AG04449 (cell line): ENCODE measurements at regions of chr16 and their contacts with region 1.

Region 1: DNA sequence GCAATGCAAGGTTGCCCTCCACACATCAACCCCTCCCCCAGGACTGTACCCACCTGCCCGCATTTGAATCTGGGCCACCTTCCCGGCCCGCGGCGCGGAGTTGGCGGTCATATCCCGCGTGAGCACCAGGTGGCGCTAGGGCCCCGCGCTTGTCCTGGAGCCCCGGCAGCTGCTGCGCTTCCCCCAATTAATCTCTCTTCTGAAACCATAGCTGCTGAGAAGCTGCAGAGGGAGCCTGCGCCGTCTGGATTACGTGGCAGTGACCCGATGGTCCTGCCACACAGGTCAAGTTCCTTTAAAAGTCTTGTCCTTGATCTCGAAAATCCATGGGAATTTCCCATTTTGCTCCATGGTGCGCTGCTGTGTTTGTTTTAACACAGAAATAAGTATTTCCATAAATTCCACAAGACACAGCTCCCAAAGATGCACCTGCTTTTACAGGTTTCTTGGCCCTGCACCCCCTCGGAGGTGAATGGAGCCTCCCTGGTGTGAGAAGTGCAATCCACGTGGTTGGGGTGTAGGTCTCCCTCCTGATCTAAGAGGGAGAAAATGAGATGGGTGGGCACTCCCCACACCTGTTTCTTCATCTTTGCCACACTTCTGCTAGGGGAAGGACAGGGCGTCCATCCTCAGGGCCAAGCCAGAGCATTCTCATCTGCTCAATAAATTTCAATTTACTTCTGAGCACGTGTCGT is 22.1 kb downstream of the COX4I1 start:
- DNase-seq: no peak
- H3K4me3 ChIP-seq: no peak overlapping the region
- CTCF ChIP-seq: peak; percentile 98

Region 2: DNA sequence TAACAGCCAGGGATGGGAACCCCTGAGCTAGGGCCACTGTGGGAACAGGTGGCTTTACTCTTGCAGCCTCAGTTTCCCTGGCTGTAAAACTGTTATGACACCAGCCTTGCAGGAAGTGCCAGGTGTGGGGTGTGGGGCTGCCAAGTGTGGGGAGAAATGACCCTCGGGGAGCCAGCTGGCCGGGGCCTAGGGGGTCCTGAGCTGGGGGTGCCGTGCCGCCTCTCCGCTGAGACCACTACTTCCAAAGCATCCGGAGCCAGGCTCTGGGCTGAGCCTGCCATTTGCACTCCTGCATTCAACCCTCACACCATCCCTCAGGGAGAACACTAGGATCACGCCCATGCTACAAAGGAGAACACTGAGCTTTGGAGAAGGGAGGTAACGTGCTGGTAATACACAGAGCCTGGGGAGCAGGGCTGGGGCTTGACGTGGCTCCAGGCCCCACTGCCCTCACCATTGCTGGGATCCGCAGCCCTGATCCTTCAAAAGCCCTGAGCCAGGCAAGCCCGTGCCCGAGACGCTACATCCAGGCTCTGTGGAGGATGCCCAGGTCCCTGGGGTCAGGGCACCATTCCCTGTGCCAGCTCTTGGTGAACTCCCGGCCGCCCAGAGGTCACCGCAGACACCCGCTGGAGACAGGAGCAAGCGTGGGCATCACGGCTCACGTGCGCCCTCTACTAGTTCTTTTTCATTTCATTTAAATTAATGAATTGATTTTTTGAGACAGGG is 104.0 kb before region 1 on chr16:
- CTCF ChIA-PET with region 1: no interaction called
- POLR2A ChIA-PET with region 1: no interaction called
- DNase-seq: no peak
- H3K4me3 ChIP-seq: no peak overlapping the region
- CTCF ChIP-seq: peak; percentile 48

Region 3: GRCh38 chr16:85746828-85747227 is 74.8 kb before region 1 on chr16:
- CTCF ChIA-PET with region 1: no interaction called
- POLR2A ChIA-PET with region 1: no interaction called
- DNase-seq: no peak
- H3K4me3 ChIP-seq: no peak overlapping the region
- CTCF ChIP-seq: no peak

Region 4: GRCh38 chr16:85805442-85806045 is 16.0 kb before region 1 on chr16:
- CTCF ChIA-PET with region 1: interaction called, 63 read pairs
- POLR2A ChIA-PET with region 1: no interaction called
- DNase-seq: no peak
- H3K4me3 ChIP-seq: no peak overlapping the region
- CTCF ChIP-seq: no peak

Region 5: DNA sequence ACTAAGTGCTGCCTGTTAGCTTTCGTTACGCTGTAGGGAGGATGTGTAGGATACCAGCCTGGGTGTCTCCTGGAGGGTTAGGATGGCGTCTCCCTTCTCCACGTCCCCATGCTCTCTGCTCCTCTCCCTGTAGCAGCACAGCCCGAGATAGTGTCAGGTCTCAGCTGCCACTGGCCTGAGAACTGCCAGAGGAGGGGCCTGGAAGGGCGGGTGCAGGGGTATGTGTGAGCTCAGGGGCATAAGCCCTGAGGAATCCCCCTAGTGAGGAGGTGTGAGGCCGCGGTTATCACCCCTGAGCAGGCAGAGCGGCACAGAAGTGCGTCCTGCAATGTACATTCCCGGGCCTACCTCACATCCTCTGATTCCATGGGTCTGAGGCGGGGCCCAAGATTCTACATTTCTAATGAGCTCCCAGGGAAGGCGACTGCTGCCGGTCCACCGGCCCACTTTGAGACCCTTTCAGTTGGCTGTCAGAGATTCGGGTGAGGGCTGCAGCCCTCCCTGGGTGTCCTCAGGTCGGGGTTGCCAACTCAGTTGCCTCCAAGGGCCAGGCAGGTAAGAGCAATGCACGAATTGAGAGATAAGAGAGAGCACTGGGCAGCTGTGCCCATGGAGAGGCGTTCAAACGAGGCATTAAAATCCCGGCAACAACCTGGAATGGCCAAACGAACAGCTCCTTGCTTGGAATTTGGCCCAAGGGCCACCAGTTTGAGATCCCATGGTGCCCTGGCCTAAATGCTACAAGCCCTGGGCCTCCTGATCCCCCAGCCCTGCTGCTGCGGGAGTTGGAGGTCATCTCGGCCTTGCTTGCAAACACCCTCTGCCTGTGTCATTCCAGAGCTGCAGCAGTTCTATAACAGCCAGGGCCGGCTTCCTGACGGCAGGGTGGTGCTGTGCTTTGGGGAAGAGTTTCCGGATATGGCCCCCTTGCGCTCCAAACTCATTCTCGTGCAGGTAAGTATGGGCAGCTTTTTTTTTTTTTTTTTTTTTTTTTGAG is 98.0 kb after region 1 on chr16:
- CTCF ChIA-PET with region 1: no interaction called
- POLR2A ChIA-PET with region 1: no interaction called
- DNase-seq: no peak
- H3K4me3 ChIP-seq: no peak overlapping the region
- CTCF ChIP-seq: no peak

Region 6: DNA sequence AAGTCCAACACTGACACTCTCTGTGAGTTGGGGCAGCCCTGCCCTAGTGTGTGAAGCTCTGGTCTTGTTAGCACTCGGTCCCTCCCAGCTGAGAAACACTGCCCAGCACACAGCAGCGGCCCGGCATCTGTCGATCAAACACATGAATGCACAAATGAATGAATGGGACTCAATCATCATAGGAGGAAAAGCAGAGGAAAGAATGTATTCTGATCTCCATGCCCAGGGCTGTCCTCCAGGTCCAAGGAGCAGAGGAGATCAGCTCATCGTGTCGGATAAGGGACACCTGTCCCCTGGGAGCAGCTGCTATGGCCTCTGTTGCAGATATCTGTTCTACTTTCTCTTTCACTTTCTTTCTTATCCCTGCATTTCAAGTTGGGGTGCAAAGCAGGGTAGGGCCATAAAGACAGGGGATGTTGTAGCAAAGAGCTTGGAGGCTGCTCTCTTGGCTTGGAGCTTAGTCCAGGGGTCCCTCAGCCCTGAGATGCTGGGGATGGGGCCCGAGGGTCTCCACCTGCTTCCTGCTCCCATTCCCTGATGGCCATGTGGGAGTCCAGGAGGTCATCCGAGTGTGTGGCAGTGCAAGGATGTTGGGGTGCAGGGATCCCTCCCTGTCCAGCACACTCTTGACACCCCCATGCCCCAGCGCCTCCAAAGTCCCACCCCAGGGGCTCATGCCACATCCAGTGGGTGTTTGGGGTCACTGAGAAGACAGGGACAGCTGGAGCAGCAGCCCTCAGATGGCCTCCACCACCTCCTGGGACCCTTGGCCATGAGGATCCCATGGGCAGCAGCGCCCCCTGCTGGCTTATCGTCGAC is 165.6 kb after region 1 on chr16:
- CTCF ChIA-PET with region 1: interaction called, 146 read pairs
- POLR2A ChIA-PET with region 1: no interaction called
- DNase-seq: no peak
- H3K4me3 ChIP-seq: no peak overlapping the region
- CTCF ChIP-seq: peak; percentile 40

Region 7: GRCh38 chr16:86002178-86002900 is 180.8 kb after region 1 on chr16:
- CTCF ChIA-PET with region 1: interaction called, 12 read pairs
- POLR2A ChIA-PET with region 1: no interaction called
- DNase-seq: no peak
- H3K4me3 ChIP-seq: no peak overlapping the region
- CTCF ChIP-seq: no peak

Region 8: GRCh38 chr16:86029131-86029741 is 207.6 kb after region 1 on chr16:
- CTCF ChIA-PET with region 1: interaction called, 37 read pairs
- POLR2A ChIA-PET with region 1: no interaction called
- DNase-seq: peak; percentile 7
- H3K4me3 ChIP-seq: no peak overlapping the region
- CTCF ChIP-seq: no peak